Mammary epithelial cell (primary cell): ENCODE measurements at regions of chr11 and their contacts with region 1.

Region 1: DNA sequence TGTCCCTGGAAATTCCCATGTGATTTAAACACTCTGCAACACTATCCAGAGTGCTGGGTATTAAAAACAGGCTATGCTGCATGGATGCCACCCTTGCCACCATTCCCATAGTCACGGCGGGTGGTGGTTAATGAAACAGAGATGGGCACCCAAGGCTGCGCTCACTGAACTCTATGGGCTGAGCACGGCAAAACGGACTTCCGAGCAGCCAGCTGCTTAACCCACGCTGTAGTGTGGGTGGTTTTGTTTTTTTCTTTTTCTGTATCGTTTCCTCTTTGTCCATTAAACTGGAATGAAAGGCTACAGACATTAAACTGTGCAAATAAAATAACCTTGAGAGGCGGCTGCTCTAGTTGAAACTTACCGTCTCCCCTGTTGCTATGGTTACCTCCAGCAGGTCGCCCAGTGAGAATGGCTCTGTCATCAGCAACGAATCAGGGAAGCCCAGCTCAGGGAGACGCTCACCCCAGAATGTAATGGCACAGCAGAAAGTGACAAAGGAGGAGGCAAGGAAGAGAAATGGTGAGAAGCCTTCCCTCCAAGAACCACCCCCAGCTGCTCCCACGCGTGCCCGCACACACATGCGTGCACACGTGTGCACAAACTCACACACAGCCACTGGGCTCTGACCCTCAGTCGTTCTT is 102.1 kb downstream of the C11orf91 start:
- DNase-seq: no peak
- H3K4me3 ChIP-seq: no peak overlapping the region
- H3K27ac ChIP-seq: no peak overlapping the region
- H3K4me1 ChIP-seq: no peaks in the 10 kb centered on the region
- H3K27me3 ChIP-seq: no peaks in the 10 kb centered on the region
- CTCF ChIP-seq: no peak

Region 2: GRCh38 chr11:33553486-33553885 is 45.1 kb before region 1 on chr11:
- CTCF ChIA-PET with region 1: no interaction called
- dilution Hi-C with region 1: no loop called
- in situ Hi-C with region 1: no loop called
- intact Hi-C with region 1: no loop called
- DNase-seq: peak; percentile 66
- H3K4me3 ChIP-seq: no peak overlapping the region
- H3K27ac ChIP-seq: no peak overlapping the region
- H3K4me1 ChIP-seq: peaks cover 26% of the 10 kb centered on the region
- H3K27me3 ChIP-seq: no peaks in the 10 kb centered on the region
- CTCF ChIP-seq: no peak

Region 3: DNA sequence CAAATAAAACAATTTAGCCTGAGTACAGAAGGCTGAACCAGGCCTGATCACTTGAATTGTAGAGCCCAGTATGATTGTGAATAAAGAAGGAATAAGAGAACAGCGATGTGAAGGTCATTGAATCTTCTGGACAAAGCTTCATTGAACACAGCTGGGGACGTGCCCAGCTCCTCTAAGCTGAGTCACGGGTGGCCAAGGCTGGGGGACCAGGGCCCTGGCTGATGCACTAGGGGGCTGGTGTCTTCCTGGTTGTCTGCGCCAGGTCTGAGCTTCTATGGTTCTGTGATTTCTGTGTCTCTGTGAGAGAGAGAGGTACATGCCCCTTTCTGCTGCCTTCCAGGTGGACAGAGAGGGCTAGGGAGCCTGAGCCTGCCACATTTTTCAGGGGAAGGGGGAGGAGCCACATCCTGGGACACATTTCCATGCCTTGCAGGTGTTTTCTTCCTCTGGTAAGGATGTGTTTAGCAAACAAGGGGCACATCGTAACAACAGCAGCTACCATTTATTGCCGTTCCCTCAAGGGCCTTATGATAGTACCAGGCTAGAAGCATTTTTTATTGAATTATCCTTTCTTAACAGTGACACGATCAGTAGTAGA is 33.6 kb before region 1 on chr11:
- CTCF ChIA-PET with region 1: no interaction called
- dilution Hi-C with region 1: no loop called
- in situ Hi-C with region 1: no loop called
- intact Hi-C with region 1: loop called (anchors 5 kb)
- DNase-seq: no peak
- H3K4me3 ChIP-seq: no peak overlapping the region
- H3K27ac ChIP-seq: no peak overlapping the region
- H3K4me1 ChIP-seq: no peaks in the 10 kb centered on the region
- H3K27me3 ChIP-seq: no peaks in the 10 kb centered on the region
- CTCF ChIP-seq: no peak